ENCODE measurements at regions of chr4 and their contacts with region 1.

Region 1: DNA sequence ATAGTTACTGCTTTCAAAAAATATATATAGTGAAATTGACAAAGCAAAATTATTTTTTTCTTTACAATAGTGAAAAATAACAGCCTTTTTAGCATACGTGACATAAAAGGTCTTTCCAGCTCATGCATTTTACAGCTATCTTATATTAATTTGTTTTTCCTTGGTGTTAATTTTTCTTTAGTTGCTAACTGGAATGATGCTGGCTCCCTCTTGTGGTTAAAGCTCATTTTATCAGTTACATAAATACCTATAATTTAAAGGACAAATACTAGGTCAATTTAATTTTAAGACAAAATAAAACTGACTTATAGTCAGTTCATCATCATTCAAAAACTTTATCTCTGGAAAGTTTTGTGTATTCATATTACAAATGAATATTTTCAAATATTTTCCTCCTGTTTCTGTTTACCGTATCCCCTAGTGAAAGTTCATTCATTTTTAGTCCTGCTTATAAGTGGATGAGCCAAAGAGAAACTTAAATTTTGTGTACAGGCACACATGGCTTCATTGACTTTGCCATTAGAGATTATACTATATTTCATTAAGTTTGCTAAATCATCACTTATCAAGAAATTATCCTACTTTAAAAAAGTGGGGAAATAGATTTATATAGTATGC is 9.9 kb upstream of the ANAPC4 start:
- DNase-seq: peak in 4 of 5 donors; percentile 21 to 35 (median 29)
- H3K4me3 ChIP-seq: no peak overlapping the region
- H3K4me3 Mint-ChIP-seq: no peak overlapping the region
- H3K27ac ChIP-seq: no peak overlapping the region
- H3K27ac Mint-ChIP-seq: peak overlapping the region in 1 of 7 donors; percentile 53
- H3K4me1 ChIP-seq: no peaks in the 10 kb centered on the region
- H3K4me1 Mint-ChIP-seq: peaks cover 0 to 1% (median 0%) of the 10 kb centered on the region in 4 donors
- H3K27me3 ChIP-seq: no peaks in the 10 kb centered on the region
- H3K27me3 Mint-ChIP-seq: no peaks in the 10 kb centered on the region

Region 2: GRCh38 chr4:25180524-25181131 is 186.5 kb before region 1 on chr4:
- CTCF ChIA-PET with region 1: interaction called, 20 read pairs
- POLR2A ChIA-PET with region 1: no interaction called
- intact Hi-C with region 1: loop called (anchors 1 kb)
- DNase-seq: peak in 4 of 5 donors; percentile 23 to 39 (median 34)
- H3K4me3 ChIP-seq: no peak overlapping the region
- H3K4me3 Mint-ChIP-seq: no peak overlapping the region
- H3K27ac ChIP-seq: no peak overlapping the region
- H3K27ac Mint-ChIP-seq: peak overlapping the region in 3 of 7 donors; percentile 29 to 57 (median 43)
- H3K4me1 ChIP-seq: peaks cover 24% of the 10 kb centered on the region
- H3K4me1 Mint-ChIP-seq: peaks cover 22 to 29% (median 27%) of the 10 kb centered on the region in 4 donors
- H3K27me3 ChIP-seq: no peaks in the 10 kb centered on the region
- H3K27me3 Mint-ChIP-seq: no peaks in the 10 kb centered on the region

Region 3: DNA sequence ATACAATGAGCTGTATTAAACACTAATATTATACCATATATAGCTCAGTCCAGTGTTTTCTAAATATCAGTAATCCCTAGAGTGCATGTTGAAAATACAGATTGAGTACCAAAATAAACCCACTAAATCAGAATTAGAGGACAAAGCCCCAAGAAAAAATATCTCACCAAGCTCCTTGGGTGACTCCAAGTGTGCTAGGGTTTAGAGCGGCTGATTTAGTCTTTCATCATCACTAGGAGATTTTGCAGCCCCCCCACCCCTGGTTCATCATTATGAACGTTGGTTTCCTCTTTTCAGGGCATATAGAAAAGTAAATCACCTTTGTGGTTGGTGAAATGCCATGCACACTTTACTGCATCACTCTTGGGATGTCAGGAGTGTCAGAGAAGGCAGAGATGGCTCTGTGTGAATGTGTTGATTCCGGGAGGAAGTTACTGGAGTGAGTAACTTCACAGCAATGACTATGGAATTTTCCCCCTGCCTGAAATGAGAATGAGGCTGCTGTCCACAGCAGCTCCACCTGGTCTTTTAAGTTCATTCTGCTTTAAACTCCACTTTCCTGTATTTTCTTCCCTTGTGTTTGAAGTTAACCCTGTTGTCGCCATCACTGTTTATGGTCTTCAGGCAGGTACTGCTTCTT is 15.2 kb before region 1 on chr4:
- CTCF ChIA-PET with region 1: interaction called, 18 read pairs
- POLR2A ChIA-PET with region 1: no interaction called
- intact Hi-C with region 1: no loop called
- DNase-seq: no peak
- H3K4me3 ChIP-seq: no peak overlapping the region
- H3K4me3 Mint-ChIP-seq: no peak overlapping the region
- H3K27ac ChIP-seq: no peak overlapping the region
- H3K27ac Mint-ChIP-seq: no peak overlapping the region
- H3K4me1 ChIP-seq: no peaks in the 10 kb centered on the region
- H3K4me1 Mint-ChIP-seq: no peaks in the 10 kb centered on the region
- H3K27me3 ChIP-seq: no peaks in the 10 kb centered on the region
- H3K27me3 Mint-ChIP-seq: no peaks in the 10 kb centered on the region